ENCODE measurements at regions of chr1 and their contacts with region 1.

Region 1: DNA sequence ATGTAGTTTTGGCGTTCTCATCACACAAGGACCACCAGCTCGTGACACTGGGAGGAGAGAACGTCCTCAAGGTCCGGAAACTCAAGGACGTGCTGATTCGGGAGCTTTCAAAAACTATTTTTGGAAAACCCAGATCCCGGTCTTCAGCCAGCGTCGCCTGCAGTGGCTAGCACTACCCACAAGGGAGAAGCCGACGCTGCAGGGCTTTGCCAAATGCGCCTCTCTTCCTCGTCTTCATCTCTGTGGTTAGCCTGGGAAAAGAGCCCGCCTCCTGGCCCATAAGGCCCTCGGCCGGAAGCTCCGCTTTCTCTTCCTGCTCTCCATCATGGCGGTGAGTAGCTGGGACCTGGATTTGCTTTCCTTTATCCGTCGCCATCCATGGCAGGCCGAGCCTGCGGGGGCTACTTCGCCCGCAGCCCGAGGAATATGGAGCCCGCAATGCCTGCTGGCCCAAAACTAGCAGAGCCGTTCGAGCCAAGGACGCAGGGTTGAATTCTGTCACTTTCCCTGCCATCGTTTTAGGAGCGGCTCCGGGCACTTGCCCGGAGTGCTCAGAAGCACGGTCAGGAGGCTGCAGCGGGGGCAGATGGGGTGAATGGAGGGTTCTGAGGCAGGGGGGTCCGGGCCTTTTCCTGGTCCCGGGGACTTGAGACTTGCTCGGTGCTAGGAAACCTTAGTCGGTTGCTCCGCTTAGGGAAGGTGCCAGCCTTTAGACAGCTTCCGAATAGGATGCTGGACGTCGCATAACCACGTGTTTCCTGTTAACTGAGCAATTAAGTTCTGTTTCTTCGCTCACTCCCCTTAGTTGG is at the start of gene RPL11:
- DNase-seq: peak; percentile 81
- ATAC-seq: peak; percentile 94
- H3K4me3 Mint-ChIP-seq: peak within 1 kb of the TSS; percentile 96
- H3K27ac Mint-ChIP-seq: peak within 1 kb of the TSS; percentile 89
- H3K4me1 Mint-ChIP-seq: peaks cover 42% of the 10 kb centered on the region
- H3K27me3 Mint-ChIP-seq: no peaks in the 10 kb centered on the region
- total RNA-seq, gene RPL11: 1,289 to 1,405 TPM

Region 2: GRCh38 chr1:23679815-23680214 is 11.9 kb before region 1 on chr1:
- POLR2A ChIA-PET with region 1: no interaction called
- DNase-seq: no peak
- ATAC-seq: no peak
- H3K4me3 Mint-ChIP-seq: no peak overlapping the region
- H3K27ac Mint-ChIP-seq: no peak overlapping the region
- H3K4me1 Mint-ChIP-seq: no peaks in the 10 kb centered on the region
- H3K27me3 Mint-ChIP-seq: peaks cover 20% of the 10 kb centered on the region

Region 3: DNA sequence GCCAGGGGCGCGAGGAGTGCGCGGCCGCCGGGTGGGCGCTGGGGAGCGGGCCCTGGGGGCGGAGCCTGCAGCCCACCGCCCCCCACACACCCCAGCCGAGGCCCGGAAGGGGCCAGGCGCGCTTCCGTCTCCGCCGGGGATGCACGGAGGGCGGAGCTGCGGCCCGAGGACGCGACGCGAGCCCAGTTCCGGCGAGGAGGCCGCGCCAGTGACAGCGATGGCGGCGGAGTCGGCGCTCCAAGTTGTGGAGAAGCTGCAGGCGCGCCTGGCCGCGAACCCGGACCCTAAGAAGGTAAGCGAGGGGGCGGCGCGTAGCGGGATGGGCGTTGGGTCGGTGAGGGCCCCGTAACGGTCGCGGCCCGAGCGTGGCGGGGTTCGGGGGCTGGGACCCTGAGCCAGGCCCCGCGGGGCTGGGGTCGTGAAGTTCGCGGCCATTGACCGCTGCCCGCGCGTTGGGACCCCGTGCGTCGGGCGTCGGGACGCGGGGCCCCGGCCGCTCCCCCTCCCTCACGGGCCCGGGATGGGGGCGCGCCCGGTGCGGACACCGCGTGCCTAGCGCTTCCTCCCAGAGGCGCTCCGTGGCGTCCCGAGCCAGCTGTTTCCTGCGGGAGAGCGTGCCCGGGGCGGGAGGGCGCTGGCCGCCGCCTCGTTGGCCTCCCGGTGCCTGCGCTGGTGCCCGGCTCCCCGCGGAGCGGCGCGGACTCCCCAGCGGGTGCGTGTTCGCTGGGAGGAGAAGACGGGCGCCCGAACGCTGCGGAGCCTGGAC is 51.8 kb after region 1 on chr1 and contains the start of gene ELOA:
- POLR2A ChIA-PET with region 1: interaction called, 27 read pairs
- DNase-seq: peak; percentile 87
- ATAC-seq: peak; percentile 95
- H3K4me3 Mint-ChIP-seq: peak within 1 kb of the TSS; percentile 92
- H3K27ac Mint-ChIP-seq: peak within 1 kb of the TSS; percentile 93
- H3K4me1 Mint-ChIP-seq: peaks cover 43% of the 10 kb centered on the region
- H3K27me3 Mint-ChIP-seq: no peaks in the 10 kb centered on the region
- total RNA-seq, gene ELOA: 27.0 to 27.7 TPM